Esophagus squamous epithelium (tissue), 5 donors: ENCODE measurements at regions of chr7 and their contacts with region 1.

Region 1: GRCh38 chr7:25496476-25497368 is 268.4 kb upstream of the NPVF start:
- DNase-seq: no peak
- H3K4me3 ChIP-seq: peak overlapping the region in 1 of 4 donors; percentile 16
- H3K27ac ChIP-seq: peak overlapping the region in 3 of 4 donors; percentile 1 to 59 (median 25)
- H3K4me1 ChIP-seq: peaks cover 0 to 23% (median 0%) of the 10 kb centered on the region in 3 donors
- H3K27me3 ChIP-seq: no peaks in the 10 kb centered on the region
- CTCF ChIP-seq: no peak
- POLR2A ChIP-seq: no peak

Region 2: GRCh38 chr7:25429731-25430130 is 67.0 kb before region 1 on chr7:
- intact Hi-C with region 1: loop called (anchors 10 kb)
- DNase-seq: no peak
- H3K4me3 ChIP-seq: no peak overlapping the region
- H3K27ac ChIP-seq: peak overlapping the region in 3 of 4 donors; percentile 13 to 52 (median 42)
- H3K4me1 ChIP-seq: no peaks in the 10 kb centered on the region
- H3K27me3 ChIP-seq: no peaks in the 10 kb centered on the region
- CTCF ChIP-seq: no peak
- POLR2A ChIP-seq: no peak

Region 3: DNA sequence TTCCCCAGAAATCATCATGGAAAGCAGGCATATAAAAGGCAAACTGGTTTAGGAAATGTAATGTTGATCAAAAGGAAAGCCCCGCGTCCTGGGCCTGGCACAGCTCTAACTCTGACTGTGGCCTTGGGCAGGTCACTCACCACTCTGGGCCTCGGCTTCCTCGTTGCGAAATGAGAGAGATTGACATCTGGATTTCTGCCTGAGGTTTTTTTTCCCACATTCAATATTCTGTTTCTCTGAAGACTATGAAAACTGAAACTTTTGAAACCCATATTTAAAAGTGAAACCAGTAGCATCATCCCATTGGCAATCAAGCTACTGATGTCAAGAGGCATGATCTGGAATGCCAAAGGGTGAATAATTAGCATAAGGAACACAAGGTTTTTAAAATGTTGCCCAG is 101.2 kb after region 1 on chr7:
- intact Hi-C with region 1: no loop called
- DNase-seq: no peak
- H3K4me3 ChIP-seq: no peak overlapping the region
- H3K27ac ChIP-seq: no peak overlapping the region
- H3K4me1 ChIP-seq: peaks cover 0 to 9% (median 5%) of the 10 kb centered on the region in 3 donors
- H3K27me3 ChIP-seq: peaks cover 0 to 3% (median 0%) of the 10 kb centered on the region in 4 donors
- CTCF ChIP-seq: no peak
- POLR2A ChIP-seq: no peak